Activated CD4-positive, alpha-beta memory T cell treated with anti-CD3 and anti-CD28 coated beads for 36 hours (primary cell): ENCODE measurements at regions of chr10 and their contacts with region 1.

Region 1: DNA sequence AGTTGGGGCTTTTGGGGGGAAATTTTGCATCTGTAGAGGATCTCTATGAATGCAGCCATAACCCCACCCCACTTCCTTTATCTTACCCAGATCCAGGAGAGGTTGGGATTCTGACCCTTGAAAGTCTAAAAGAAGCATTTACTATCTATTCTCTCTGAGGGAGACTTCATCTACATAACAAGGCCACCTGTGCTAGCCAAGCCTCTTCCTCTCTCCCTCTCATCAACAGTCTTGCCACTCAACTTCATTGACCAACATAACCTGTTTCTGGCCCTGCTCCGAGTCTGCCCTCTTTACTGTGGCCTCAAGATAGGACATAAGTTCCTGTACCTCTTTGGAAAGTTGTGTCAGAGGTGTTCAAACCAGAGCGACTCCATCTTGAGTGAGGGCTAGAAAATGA is 19.4 kb downstream of the TUBAL3 start:
- DNase-seq: no peak
- H3K4me3 Mint-ChIP-seq: no peak overlapping the region
- H3K27ac Mint-ChIP-seq: no peak overlapping the region
- H3K4me1 Mint-ChIP-seq: no peaks in the 10 kb centered on the region
- H3K27me3 Mint-ChIP-seq: peaks cover 5% of the 10 kb centered on the region

Region 2: DNA sequence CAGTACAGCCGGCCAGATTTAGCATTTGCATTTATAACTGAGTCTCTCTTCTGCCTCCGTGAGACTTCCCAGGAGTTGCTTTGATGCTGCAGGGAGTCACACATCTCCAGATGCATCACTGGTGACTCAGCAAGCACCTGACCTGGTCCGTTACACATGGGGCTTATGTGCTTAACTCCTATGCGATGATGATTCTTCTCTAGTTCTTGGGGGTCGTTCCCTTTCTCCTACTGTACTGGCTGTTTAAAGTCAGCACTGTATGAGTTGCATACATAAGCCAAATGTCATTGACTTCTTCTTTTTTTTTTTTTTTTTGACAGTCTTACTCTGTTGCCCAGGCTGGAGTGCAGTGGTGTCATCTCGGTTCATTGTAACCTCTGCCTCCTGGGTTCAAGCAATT is 572.2 kb before region 1 on chr10:
- CTCF ChIA-PET with region 1: interaction called, 10 read pairs
- POLR2A ChIA-PET with region 1: no interaction called
- intact Hi-C with region 1: loop called (anchors 1 kb)
- DNase-seq: no peak
- H3K4me3 Mint-ChIP-seq: no peak overlapping the region
- H3K27ac Mint-ChIP-seq: no peak overlapping the region
- H3K4me1 Mint-ChIP-seq: no peaks in the 10 kb centered on the region
- H3K27me3 Mint-ChIP-seq: peaks cover 5% of the 10 kb centered on the region

Region 3: DNA sequence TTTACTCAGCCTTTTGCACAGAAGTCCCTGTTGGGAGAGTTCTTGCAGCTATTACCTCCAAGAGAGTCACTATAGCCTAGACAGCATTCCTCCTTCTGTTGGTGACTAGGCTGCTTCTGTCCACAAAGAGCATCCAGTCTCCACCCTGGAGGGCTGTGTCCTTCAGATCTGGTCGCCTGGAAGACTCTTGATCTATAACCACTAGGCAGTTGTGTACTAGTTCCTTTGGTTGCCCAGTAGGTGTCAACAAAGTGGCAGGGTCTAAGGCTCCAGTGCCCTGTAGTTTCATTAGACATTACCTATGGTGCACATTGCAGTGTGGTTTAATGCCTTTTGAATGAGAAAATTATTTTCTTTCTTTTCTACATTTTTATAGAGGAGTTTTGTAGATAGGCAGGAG is 370.3 kb before region 1 on chr10:
- CTCF ChIA-PET with region 1: no interaction called
- POLR2A ChIA-PET with region 1: no interaction called
- intact Hi-C with region 1: loop called (anchors 5 kb)
- DNase-seq: no peak
- H3K4me3 Mint-ChIP-seq: no peak overlapping the region
- H3K27ac Mint-ChIP-seq: no peak overlapping the region
- H3K4me1 Mint-ChIP-seq: no peaks in the 10 kb centered on the region
- H3K27me3 Mint-ChIP-seq: no peaks in the 10 kb centered on the region

Region 4: GRCh38 chr10:5094265-5095205 is 290.7 kb before region 1 on chr10 and contains the start of gene AKR1C3:
- CTCF ChIA-PET with region 1: interaction called, 4 read pairs
- POLR2A ChIA-PET with region 1: no interaction called
- intact Hi-C with region 1: loop called (anchors 5 kb)
- DNase-seq: no peak
- H3K4me3 Mint-ChIP-seq: peak within 1 kb of the TSS; percentile 47
- H3K27ac Mint-ChIP-seq: no peak within 1 kb of the TSS
- H3K4me1 Mint-ChIP-seq: peaks cover 11% of the 10 kb centered on the region
- H3K27me3 Mint-ChIP-seq: peaks cover 13% of the 10 kb centered on the region
- total RNA-seq, gene AKR1C3: 0.33 to 0.70 TPM

Region 5: GRCh38 chr10:5283305-5284158 is 101.7 kb before region 1 on chr10:
- CTCF ChIA-PET with region 1: interaction called, 4 read pairs
- POLR2A ChIA-PET with region 1: no interaction called
- intact Hi-C with region 1: loop called (anchors 5 kb)
- DNase-seq: peak; percentile 78
- H3K4me3 Mint-ChIP-seq: no peak overlapping the region
- H3K27ac Mint-ChIP-seq: peak overlapping the region; percentile 83
- H3K4me1 Mint-ChIP-seq: peaks cover 34% of the 10 kb centered on the region
- H3K27me3 Mint-ChIP-seq: no peaks in the 10 kb centered on the region

Region 6: GRCh38 chr10:5362873-5363272 is 22.4 kb before region 1 on chr10:
- CTCF ChIA-PET with region 1: no interaction called
- POLR2A ChIA-PET with region 1: no interaction called
- intact Hi-C with region 1: no loop called
- DNase-seq: no peak
- H3K4me3 Mint-ChIP-seq: no peak overlapping the region
- H3K27ac Mint-ChIP-seq: no peak overlapping the region
- H3K4me1 Mint-ChIP-seq: peaks cover 6% of the 10 kb centered on the region
- H3K27me3 Mint-ChIP-seq: peaks cover 9% of the 10 kb centered on the region

Region 7: GRCh38 chr10:5434017-5434753 is 49.0 kb after region 1 on chr10:
- CTCF ChIA-PET with region 1: interaction called, 10 read pairs
- POLR2A ChIA-PET with region 1: no interaction called
- intact Hi-C with region 1: loop called (anchors 1 kb)
- DNase-seq: no peak
- H3K4me3 Mint-ChIP-seq: no peak overlapping the region
- H3K27ac Mint-ChIP-seq: no peak overlapping the region
- H3K4me1 Mint-ChIP-seq: peaks cover 17% of the 10 kb centered on the region
- H3K27me3 Mint-ChIP-seq: no peaks in the 10 kb centered on the region